Naive thymus-derived CD4-positive, alpha-beta T cell (primary cell): ENCODE measurements at regions of chr4 and their contacts with region 1.

Region 1: DNA sequence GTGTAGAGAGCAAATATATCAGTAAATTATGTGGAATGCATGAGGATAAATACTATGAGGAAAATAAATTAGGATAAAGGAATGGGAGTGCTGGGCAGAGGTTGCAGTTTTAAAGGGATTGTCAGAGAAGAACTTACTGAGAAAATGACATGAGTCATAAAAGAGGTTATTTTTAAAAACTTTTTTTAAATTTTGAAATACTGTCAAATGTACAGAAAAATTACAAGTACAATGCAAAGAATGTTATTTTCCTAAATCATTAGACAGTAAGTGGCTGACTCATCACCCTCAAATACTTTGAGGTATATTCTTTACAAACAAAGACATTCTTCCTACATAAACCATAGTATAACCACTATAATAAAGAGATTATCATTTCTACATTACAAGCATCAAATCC is 29.8 kb upstream of the H2AZ1 start:
- DNase-seq: no peak
- ATAC-seq: no peak
- H3K4me3 ChIP-seq: no peak overlapping the region
- H3K4me3 Mint-ChIP-seq: no peak overlapping the region
- H3K27ac ChIP-seq: no peak overlapping the region
- H3K27ac Mint-ChIP-seq: no peak overlapping the region
- H3K4me1 ChIP-seq: no peaks in the 10 kb centered on the region
- H3K4me1 Mint-ChIP-seq: no peaks in the 10 kb centered on the region
- H3K27me3 ChIP-seq: no peaks in the 10 kb centered on the region
- H3K27me3 Mint-ChIP-seq: peaks cover 0 to 18% (median 14%) of the 10 kb centered on the region in 5 donors

Region 2: DNA sequence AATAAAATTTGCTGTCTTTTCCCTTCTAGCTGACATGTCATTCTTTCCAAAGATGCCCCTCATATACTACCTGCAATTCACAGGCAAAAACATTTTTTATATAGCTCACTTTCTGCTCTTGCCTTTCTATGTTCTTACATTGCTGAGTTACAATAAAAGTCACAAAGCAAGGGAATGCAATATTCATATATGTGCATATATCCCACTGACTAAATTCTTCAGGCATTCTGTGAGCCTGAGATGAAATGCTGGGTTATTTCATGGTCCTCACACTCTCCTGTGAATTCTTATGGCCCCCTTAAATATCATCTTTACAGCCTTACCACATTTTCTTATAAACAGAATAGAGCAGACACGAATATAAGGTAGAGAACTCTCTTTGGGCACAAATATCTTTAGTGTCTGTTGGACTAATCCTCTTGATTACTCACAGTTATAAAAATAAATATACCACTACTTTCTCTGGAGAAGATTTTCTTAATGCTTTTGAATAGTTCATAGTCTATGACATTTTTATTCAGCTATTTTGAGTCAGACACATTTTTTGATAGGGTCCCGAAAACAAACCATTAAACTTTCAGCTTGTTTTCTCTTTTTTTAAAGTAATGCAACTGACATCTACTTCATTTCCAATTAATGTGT is 54.3 kb after region 1 on chr4:
- CTCF ChIA-PET with region 1: no interaction called
- POLR2A ChIA-PET with region 1: no interaction called
- intact Hi-C with region 1: loop called in 1 of 2 experiments (anchors 1 kb)
- DNase-seq: no peak
- ATAC-seq: no peak
- H3K4me3 ChIP-seq: no peak overlapping the region
- H3K4me3 Mint-ChIP-seq: no peak overlapping the region
- H3K27ac ChIP-seq: no peak overlapping the region
- H3K27ac Mint-ChIP-seq: no peak overlapping the region
- H3K4me1 ChIP-seq: no peaks in the 10 kb centered on the region
- H3K4me1 Mint-ChIP-seq: no peaks in the 10 kb centered on the region
- H3K27me3 ChIP-seq: no peaks in the 10 kb centered on the region
- H3K27me3 Mint-ChIP-seq: peaks cover 0 to 17% (median 6%) of the 10 kb centered on the region in 5 donors

Region 3: GRCh38 chr4:100147198-100147597 is 167.3 kb after region 1 on chr4:
- CTCF ChIA-PET with region 1: no interaction called
- POLR2A ChIA-PET with region 1: no interaction called
- intact Hi-C with region 1: no loop called
- DNase-seq: no peak
- ATAC-seq: no peak
- H3K4me3 ChIP-seq: no peak overlapping the region
- H3K4me3 Mint-ChIP-seq: no peak overlapping the region
- H3K27ac ChIP-seq: no peak overlapping the region
- H3K27ac Mint-ChIP-seq: no peak overlapping the region
- H3K4me1 ChIP-seq: no peaks in the 10 kb centered on the region
- H3K4me1 Mint-ChIP-seq: peaks cover 0 to 6% (median 0%) of the 10 kb centered on the region in 7 donors
- H3K27me3 ChIP-seq: no peaks in the 10 kb centered on the region
- H3K27me3 Mint-ChIP-seq: peaks cover 0 to 8% (median 4%) of the 10 kb centered on the region in 5 donors